Activated B cell treated with CpG ODN at 0.5 μM for 24 hours (primary cell): ENCODE measurements at regions of chr9 and their contacts with region 1.

Region 1: DNA sequence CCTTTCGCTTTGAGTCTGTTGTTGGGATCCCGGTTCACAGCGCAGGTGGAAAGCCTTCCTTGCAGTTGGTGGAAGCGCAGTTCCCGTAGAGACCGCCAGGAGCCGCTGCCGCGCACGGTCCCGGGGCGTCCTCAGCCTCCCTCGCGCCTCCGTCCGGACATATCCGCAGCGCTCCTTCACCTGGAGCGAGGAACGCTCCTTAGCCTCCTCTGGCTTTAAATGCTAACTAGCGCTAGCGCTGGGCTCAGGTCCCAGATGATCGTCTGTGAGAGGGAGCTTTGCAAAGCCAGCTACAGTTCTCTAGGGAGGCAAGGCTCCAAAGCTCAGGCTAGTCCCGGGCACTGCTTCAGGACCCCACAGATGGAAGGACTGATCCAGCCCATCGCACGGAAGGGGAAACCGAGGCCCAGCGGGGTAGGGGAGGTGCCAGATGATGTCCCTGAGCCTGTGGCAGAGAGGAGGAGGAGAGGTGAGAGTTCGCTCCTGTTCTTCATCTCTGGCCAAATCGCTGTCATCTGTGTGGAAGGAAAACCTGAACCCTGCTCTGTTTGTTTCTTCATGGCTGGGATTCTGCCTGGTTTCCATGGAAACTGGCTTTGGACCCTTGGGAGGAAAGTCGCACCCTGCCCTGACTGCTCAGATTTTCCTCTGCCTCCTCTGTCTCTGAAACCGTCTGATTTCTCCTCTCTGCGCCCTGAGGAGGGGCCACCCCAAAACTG is 31.4 kb downstream of the COL15A1 start:
- DNase-seq: peak; percentile 80
- ATAC-seq: peak; percentile 98
- H3K4me3 Mint-ChIP-seq: peak overlapping the region; percentile 15
- H3K27ac Mint-ChIP-seq: no peak overlapping the region
- H3K4me1 Mint-ChIP-seq: peaks cover 5% of the 10 kb centered on the region
- H3K27me3 Mint-ChIP-seq: peaks cover 2% of the 10 kb centered on the region
- CTCF ChIP-seq: peak; percentile 89

Region 2: GRCh38 chr9:98848450-98849149 is 126.6 kb before region 1 on chr9:
- CTCF ChIA-PET with region 1: interaction called, 4 read pairs
- POLR2A ChIA-PET with region 1: no interaction called
- intact Hi-C with region 1: loop called (anchors 1 kb)
- DNase-seq: peak; percentile 59
- ATAC-seq: peak; percentile 97
- H3K4me3 Mint-ChIP-seq: no peak overlapping the region
- H3K27ac Mint-ChIP-seq: no peak overlapping the region
- H3K4me1 Mint-ChIP-seq: no peaks in the 10 kb centered on the region
- H3K27me3 Mint-ChIP-seq: no peaks in the 10 kb centered on the region
- CTCF ChIP-seq: peak; percentile 59

Region 3: DNA sequence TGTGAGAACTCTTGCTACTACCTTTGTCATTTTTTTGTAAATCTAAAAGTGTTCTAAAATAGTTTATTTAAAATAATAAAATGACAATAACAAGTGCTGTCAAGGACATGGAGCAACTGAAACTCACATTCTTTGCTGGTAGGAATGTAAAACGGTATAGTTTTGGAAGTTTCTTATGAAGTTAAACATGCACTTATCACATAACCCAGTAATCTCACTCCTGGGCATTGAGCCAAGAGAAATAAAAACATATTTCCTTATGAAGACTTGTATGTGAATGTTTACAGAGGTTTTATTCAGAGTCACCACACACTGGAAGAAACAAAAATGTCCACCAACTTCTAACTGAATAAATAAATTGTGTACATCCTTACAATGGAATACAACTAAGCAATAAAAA is 77.4 kb before region 1 on chr9:
- CTCF ChIA-PET with region 1: no interaction called
- POLR2A ChIA-PET with region 1: no interaction called
- intact Hi-C with region 1: no loop called
- DNase-seq: no peak
- ATAC-seq: no peak
- H3K4me3 Mint-ChIP-seq: no peak overlapping the region
- H3K27ac Mint-ChIP-seq: no peak overlapping the region
- H3K4me1 Mint-ChIP-seq: no peaks in the 10 kb centered on the region
- H3K27me3 Mint-ChIP-seq: peaks cover 27% of the 10 kb centered on the region
- CTCF ChIP-seq: no peak

Region 4: DNA sequence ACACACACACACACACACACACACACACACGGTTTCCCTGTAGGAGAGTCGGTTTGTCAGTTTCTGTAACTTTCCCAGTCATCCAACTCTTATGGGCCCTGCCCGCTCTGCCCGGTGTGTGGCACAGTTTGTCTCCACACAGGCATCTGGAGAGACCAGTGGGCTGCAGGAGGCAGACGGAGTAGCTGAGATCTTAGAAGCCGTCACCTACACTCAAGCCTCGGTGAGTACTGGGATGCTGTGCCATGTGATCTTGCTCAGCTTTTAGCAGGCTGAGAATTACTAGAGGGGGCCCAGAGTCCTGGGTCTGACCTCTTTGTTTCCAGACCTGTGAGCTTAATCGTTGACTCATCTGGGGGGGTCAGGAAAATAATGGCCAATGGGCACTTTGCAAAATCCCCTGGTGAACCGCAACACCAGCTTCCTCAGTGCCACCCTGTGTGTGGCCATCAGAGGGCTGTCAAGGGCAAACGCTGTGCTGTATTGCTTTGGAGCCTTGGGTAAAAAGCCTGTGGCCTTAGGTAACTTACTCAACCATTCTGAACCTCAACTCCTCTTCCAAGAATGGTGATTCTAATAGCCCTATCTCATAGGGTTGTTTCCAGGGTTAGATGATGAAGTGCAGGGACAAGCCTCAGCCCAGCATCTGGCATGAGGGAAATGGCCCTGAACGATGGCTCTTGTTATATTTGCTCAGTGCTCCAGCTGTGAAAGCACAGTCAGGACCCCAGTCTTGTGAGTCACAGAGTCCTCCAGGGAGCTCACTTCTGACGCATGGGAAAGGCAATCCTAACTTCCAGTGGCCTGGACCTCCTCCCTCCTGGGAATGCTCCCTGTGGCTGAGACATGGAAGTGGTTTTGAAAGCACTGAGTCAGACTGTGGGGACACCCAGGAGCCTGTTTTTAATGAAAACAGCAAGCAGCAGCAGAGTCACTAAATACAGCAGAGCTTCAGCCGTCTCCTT is 14.2 kb after region 1 on chr9:
- CTCF ChIA-PET with region 1: interaction called, 10 read pairs
- POLR2A ChIA-PET with region 1: no interaction called
- intact Hi-C with region 1: no loop called
- DNase-seq: no peak
- ATAC-seq: no peak
- H3K4me3 Mint-ChIP-seq: no peak overlapping the region
- H3K27ac Mint-ChIP-seq: no peak overlapping the region
- H3K4me1 Mint-ChIP-seq: peaks cover 21% of the 10 kb centered on the region
- H3K27me3 Mint-ChIP-seq: no peaks in the 10 kb centered on the region
- CTCF ChIP-seq: no peak

Region 5: GRCh38 chr9:98998441-98999151 is 23.4 kb after region 1 on chr9:
- CTCF ChIA-PET with region 1: interaction called, 39 read pairs
- POLR2A ChIA-PET with region 1: no interaction called
- intact Hi-C with region 1: loop called (anchors 1 kb)
- DNase-seq: peak; percentile 57
- ATAC-seq: peak; percentile 74
- H3K4me3 Mint-ChIP-seq: no peak overlapping the region
- H3K27ac Mint-ChIP-seq: no peak overlapping the region
- H3K4me1 Mint-ChIP-seq: peaks cover 21% of the 10 kb centered on the region
- H3K27me3 Mint-ChIP-seq: peaks cover 2% of the 10 kb centered on the region
- CTCF ChIP-seq: peak; percentile 67

Region 6: GRCh38 chr9:99019790-99020331 is 44.7 kb after region 1 on chr9:
- CTCF ChIA-PET with region 1: no interaction called
- POLR2A ChIA-PET with region 1: no interaction called
- intact Hi-C with region 1: no loop called
- DNase-seq: no peak
- ATAC-seq: no peak
- H3K4me3 Mint-ChIP-seq: no peak overlapping the region
- H3K27ac Mint-ChIP-seq: no peak overlapping the region
- H3K4me1 Mint-ChIP-seq: no peaks in the 10 kb centered on the region
- H3K27me3 Mint-ChIP-seq: no peaks in the 10 kb centered on the region
- CTCF ChIP-seq: no peak

Region 7: DNA sequence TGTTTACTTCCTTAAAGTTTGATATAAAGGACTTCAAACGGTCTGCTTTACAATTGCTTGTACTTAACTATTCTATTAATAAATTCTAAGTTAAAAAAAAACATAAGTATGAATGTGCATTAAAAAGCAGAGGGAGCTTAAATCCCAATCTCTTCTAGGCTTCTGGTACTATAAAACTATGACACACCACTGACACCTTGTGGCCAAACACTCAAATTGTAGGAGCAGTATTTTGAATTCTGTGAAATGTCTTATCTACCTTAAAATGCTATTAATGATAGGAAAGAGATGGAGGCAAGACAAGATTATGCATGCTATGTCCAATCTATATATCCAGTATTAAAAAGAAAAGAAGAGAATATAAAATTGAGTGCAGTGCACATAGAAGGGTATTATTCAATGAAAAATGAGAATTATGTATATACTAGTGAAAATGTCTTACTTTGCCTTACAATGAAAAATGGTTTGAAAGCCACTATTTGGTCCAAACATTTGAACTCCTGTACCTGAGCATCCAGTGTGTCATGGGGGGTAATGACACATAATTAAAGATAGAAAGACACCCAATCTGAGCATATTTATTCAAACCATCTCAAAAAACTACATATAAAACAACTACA is 1036.0 kb after region 1 on chr9:
- CTCF ChIA-PET with region 1: no interaction called
- POLR2A ChIA-PET with region 1: no interaction called
- intact Hi-C with region 1: loop called (anchors 10 kb)
- DNase-seq: no peak
- ATAC-seq: peak; percentile 62
- H3K4me3 Mint-ChIP-seq: no peak overlapping the region
- H3K27ac Mint-ChIP-seq: no peak overlapping the region
- H3K4me1 Mint-ChIP-seq: no peaks in the 10 kb centered on the region
- H3K27me3 Mint-ChIP-seq: no peaks in the 10 kb centered on the region
- CTCF ChIP-seq: no peak

Region 8: DNA sequence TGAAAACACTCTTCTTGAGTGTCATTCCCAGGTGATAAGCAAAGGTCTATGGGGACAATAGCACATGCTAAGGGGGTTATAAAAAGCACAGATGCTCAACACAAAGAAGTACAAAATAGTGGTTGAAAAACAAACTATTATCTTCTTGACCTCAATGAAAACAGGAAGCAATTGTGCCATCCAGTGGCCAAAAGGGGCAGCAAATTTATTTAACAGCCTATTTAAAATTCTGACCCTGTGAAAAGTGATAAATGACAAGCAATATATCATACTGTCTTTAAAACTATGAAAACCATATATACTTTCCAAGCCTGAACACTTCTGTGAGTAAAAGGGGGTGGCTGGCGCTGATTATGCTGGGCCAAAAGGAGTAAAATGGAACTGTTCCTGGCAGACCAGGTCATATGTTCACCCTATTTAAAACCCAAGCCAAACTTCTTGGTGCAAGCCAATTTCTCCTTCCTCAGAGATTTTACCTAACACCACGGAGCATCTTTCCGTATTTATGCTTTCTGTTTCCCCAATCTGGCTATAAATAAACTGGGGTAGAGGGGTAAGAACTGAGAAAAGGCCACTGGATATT is 1347.9 kb after region 1 on chr9:
- CTCF ChIA-PET with region 1: no interaction called
- POLR2A ChIA-PET with region 1: no interaction called
- intact Hi-C with region 1: loop called (anchors 1 kb)
- DNase-seq: no peak
- ATAC-seq: no peak
- H3K4me3 Mint-ChIP-seq: no peak overlapping the region
- H3K27ac Mint-ChIP-seq: no peak overlapping the region
- H3K4me1 Mint-ChIP-seq: peaks cover 2% of the 10 kb centered on the region
- H3K27me3 Mint-ChIP-seq: no peaks in the 10 kb centered on the region
- CTCF ChIP-seq: no peak